CD8-positive, alpha-beta memory T cell (primary cell): ENCODE measurements at regions of chr6 and their contacts with region 1.

Region 1: GRCh38 chr6:1436334-1437306 is 47.2 kb downstream of the FOXF2 start:
- DNase-seq: peak in 2 of 5 donors; percentile 29
- H3K4me3 ChIP-seq: no peak overlapping the region
- H3K4me3 Mint-ChIP-seq: no peak overlapping the region
- H3K27ac ChIP-seq: no peak overlapping the region
- H3K27ac Mint-ChIP-seq: no peak overlapping the region
- H3K4me1 ChIP-seq: no peaks in the 10 kb centered on the region
- H3K4me1 Mint-ChIP-seq: no peaks in the 10 kb centered on the region
- H3K27me3 ChIP-seq: peaks cover 3% of the 10 kb centered on the region
- H3K27me3 Mint-ChIP-seq: peaks cover 27 to 42% of the 10 kb centered on the region in 2 donors

Region 2: DNA sequence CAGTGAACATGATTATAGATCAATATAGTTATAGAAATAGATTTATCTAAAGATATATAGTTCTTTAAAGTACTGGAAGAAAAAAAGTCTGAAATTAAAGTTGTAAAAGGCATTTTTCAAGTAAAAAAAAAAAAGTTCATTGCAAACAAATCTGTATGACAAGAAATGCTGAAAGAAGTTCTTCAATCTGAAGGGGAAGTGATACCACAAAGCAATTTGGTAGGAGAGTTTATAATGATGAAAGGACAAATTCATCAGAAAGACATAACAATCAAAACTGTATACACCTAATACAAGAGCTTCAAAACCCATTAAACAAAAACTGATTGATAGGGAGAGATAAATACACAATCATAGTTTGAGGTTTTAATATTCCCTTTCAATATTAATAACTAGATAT is 793.8 kb before region 1 on chr6:
- CTCF ChIA-PET with region 1: no interaction called
- POLR2A ChIA-PET with region 1: no interaction called
- DNase-seq: no peak
- H3K4me3 ChIP-seq: no peak overlapping the region
- H3K4me3 Mint-ChIP-seq: no peak overlapping the region
- H3K27ac ChIP-seq: no peak overlapping the region
- H3K27ac Mint-ChIP-seq: no peak overlapping the region
- H3K4me1 ChIP-seq: no peaks in the 10 kb centered on the region
- H3K4me1 Mint-ChIP-seq: peaks cover 55 to 62% (median 59%) of the 10 kb centered on the region in 3 donors
- H3K27me3 ChIP-seq: no peaks in the 10 kb centered on the region
- H3K27me3 Mint-ChIP-seq: no peaks in the 10 kb centered on the region

Region 3: DNA sequence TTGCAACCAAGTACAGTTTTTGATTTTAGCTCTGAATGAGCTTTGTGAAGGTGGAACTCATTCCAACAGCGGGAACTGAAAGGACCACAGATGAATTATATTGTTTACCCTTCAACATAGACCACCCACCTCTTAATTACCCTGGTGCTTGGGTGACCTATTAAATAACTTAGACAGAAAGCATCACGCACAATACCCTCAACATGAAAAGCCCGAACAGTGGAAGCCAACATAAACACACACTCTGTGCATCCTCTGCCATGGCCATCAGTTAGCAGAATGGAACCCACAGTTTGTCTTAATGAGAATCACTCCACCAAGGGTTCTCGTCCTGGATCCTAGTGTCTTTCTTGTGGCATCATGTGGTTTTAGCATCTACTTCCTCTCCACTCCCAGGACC is 13.3 kb after region 1 on chr6:
- CTCF ChIA-PET with region 1: interaction called, 10 read pairs
- POLR2A ChIA-PET with region 1: no interaction called
- DNase-seq: no peak
- H3K4me3 ChIP-seq: no peak overlapping the region
- H3K4me3 Mint-ChIP-seq: no peak overlapping the region
- H3K27ac ChIP-seq: no peak overlapping the region
- H3K27ac Mint-ChIP-seq: no peak overlapping the region
- H3K4me1 ChIP-seq: no peaks in the 10 kb centered on the region
- H3K4me1 Mint-ChIP-seq: no peaks in the 10 kb centered on the region
- H3K27me3 ChIP-seq: no peaks in the 10 kb centered on the region
- H3K27me3 Mint-ChIP-seq: peaks cover 22 to 42% of the 10 kb centered on the region in 2 donors